ENCODE measurements at regions of chr5 and their contacts with region 1.

Region 1: GRCh38 chr5:10994088-10994986 is 233.3 kb upstream of the DAP start:
- DNase-seq: no peak
- ATAC-seq: no peak
- H3K4me3 ChIP-seq: no peak overlapping the region
- H3K27ac ChIP-seq: no peak overlapping the region
- H3K4me1 ChIP-seq: no peaks in the 10 kb centered on the region
- H3K27me3 ChIP-seq: peaks cover 15% of the 10 kb centered on the region
- CTCF ChIP-seq: no peak

Region 2: GRCh38 chr5:11182441-11183268 is 188.3 kb after region 1 on chr5:
- CTCF ChIA-PET with region 1: no interaction called
- POLR2A ChIA-PET with region 1: no interaction called
- in situ Hi-C with region 1: no loop called
- intact Hi-C with region 1: loop called (anchors 10 kb)
- DNase-seq: peak; percentile 12
- ATAC-seq: peak; percentile 74
- H3K4me3 ChIP-seq: no peak overlapping the region
- H3K27ac ChIP-seq: no peak overlapping the region
- H3K4me1 ChIP-seq: no peaks in the 10 kb centered on the region
- H3K27me3 ChIP-seq: peaks cover 7% of the 10 kb centered on the region
- CTCF ChIP-seq: peak; percentile 71